Heart right ventricle (tissue), 16 donors: ENCODE measurements at regions of chr6 and their contacts with region 1.

Region 1: DNA sequence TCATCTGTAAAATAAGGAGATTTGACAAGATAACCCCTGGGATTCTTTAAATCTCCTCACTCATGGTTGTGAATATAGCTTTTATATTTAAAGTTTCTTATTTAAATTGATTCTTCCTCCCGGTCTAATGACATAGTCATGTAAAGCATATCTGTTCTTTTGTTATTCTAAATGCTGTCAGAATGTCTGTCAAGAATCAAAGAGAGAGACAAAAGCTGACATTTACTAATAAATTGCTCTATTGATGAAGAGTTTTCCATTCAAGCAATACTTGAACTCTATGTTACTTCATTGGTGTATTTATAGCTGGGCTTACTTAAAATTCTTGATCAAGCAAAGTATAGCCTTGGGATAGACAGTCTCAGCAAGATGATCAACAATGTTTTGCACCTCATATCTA is 865.8 kb downstream of the TBC1D32 start:
- DNase-seq: no peak
- ATAC-seq: no peak
- H3K4me3 ChIP-seq: no peak overlapping the region
- H3K27ac ChIP-seq: no peak overlapping the region
- H3K4me1 ChIP-seq: no peaks in the 10 kb centered on the region
- H3K27me3 ChIP-seq: no peaks in the 10 kb centered on the region
- CTCF ChIP-seq: no peak

Region 2: GRCh38 chr6:120511712-120512111 is 43.2 kb after region 1 on chr6:
- intact Hi-C with region 1: loop called in 1 of 10 experiments (anchors 2 kb)
- DNase-seq: no peak
- ATAC-seq: no peak
- H3K4me3 ChIP-seq: no peak overlapping the region
- H3K27ac ChIP-seq: no peak overlapping the region
- H3K4me1 ChIP-seq: no peaks in the 10 kb centered on the region
- H3K27me3 ChIP-seq: no peaks in the 10 kb centered on the region
- CTCF ChIP-seq: no peak

Region 3: DNA sequence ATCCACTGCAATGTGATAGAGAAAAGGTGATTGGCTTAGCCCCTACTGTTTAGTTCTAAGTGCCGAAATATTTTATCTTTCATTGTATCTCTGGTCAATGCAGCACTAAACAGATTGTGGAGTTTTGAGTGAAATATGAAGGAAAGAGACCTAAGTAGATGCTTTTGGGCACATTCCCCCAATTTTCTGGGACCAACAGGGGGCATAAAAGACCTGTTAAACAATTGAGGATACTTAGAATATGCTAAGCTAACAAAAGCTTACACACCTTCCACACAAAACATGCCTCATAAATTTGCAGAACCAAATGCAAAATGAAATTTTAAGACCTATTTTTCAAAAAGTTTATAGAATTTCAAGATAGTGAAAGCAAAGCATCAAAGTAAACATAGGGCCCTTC is 118.9 kb after region 1 on chr6:
- intact Hi-C with region 1: no loop called
- DNase-seq: no peak
- ATAC-seq: no peak
- H3K4me3 ChIP-seq: no peak overlapping the region
- H3K27ac ChIP-seq: no peak overlapping the region
- H3K4me1 ChIP-seq: no peaks in the 10 kb centered on the region
- H3K27me3 ChIP-seq: no peaks in the 10 kb centered on the region
- CTCF ChIP-seq: no peak